OCI-LY7 (cell line): ENCODE measurements at regions of chr5 and their contacts with region 1.

Region 1: GRCh38 chr5:148730943-148731861 is 76.9 kb upstream of the HTR4 start:
- DNase-seq: peak; percentile 88
- H3K4me3 ChIP-seq: peak overlapping the region; percentile 28
- H3K27ac ChIP-seq: no peak overlapping the region
- H3K4me1 ChIP-seq: no peaks in the 10 kb centered on the region
- CTCF ChIP-seq: peak; percentile 100

Region 2: GRCh38 chr5:148179234-148179824 is 551.9 kb before region 1 on chr5:
- CTCF ChIA-PET with region 1: interaction called, 4 read pairs
- POLR2A ChIA-PET with region 1: no interaction called
- intact Hi-C with region 1: loop called (anchors 1 kb)
- DNase-seq: peak; percentile 61
- H3K4me3 ChIP-seq: no peak overlapping the region
- H3K27ac ChIP-seq: no peak overlapping the region
- H3K4me1 ChIP-seq: no peaks in the 10 kb centered on the region
- CTCF ChIP-seq: peak; percentile 87

Region 3: DNA sequence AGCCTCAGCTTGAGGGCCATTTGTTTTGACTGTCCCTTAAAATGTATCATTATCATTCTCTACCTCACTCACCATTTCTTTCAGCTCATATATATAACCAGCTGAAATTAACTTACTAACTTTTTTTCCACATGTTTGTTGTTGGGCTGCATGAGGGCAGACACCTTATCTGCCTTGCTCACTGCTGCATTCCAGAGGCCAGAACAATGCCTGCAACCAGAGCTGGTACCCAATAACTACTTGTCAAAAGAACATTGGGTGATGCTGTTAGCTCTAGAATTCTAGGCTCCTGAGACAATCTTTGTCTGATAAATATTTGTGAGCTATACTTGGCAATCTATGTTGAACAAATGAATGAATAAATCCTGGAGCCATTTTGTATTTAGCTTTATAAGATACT is 145.2 kb before region 1 on chr5:
- CTCF ChIA-PET with region 1: no interaction called
- POLR2A ChIA-PET with region 1: no interaction called
- intact Hi-C with region 1: no loop called
- DNase-seq: no peak
- H3K4me3 ChIP-seq: no peak overlapping the region
- H3K27ac ChIP-seq: no peak overlapping the region
- H3K4me1 ChIP-seq: no peaks in the 10 kb centered on the region
- CTCF ChIP-seq: 0 out of 2 replicates have a peak, but pooled peaks have one; percentile 17

Region 4: DNA sequence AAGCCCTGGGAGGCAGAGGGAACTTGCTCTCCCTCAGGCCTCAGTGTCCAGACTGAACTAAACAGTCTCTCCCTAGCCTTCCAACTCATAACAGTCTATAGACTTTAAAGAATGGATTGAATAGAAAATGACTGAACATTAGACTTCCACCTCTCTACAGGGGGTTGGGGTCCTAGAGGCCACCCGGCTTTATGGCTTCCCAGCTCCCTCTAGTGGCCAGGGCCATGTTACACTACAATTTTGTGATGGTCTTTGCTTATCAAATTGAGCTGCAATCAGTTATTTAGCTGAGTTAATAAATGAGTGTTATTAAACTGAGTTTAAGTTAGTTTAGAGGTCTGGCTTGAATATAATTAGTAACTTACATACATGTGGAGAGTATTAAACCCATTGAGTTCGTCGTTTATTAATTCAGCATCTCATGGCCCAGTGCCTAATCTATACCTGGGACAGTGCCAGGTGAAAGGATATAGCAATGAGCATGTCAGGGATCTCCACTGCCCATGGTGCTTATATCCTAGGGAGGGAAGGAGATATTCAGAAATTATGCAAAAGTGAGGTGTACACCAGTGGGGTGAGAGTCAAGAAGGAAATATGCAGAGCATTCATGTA is 226.5 kb after region 1 on chr5:
- CTCF ChIA-PET with region 1: interaction called, 24 read pairs
- POLR2A ChIA-PET with region 1: no interaction called
- intact Hi-C with region 1: loop called (anchors 1 kb)
- DNase-seq: peak; percentile 76
- H3K4me3 ChIP-seq: no peak overlapping the region
- H3K27ac ChIP-seq: no peak overlapping the region
- H3K4me1 ChIP-seq: no peaks in the 10 kb centered on the region
- CTCF ChIP-seq: peak; percentile 100

Region 5: GRCh38 chr5:149035372-149035790 is 304.2 kb after region 1 on chr5:
- CTCF ChIA-PET with region 1: interaction called, 6 read pairs
- POLR2A ChIA-PET with region 1: interaction called, 5 read pairs
- intact Hi-C with region 1: loop called (anchors 1 kb)
- DNase-seq: peak; percentile 54
- H3K4me3 ChIP-seq: no peak overlapping the region
- H3K27ac ChIP-seq: no peak overlapping the region
- H3K4me1 ChIP-seq: no peaks in the 10 kb centered on the region
- CTCF ChIP-seq: peak; percentile 89

Region 6: GRCh38 chr5:149268928-149269557 is 537.8 kb after region 1 on chr5:
- CTCF ChIA-PET with region 1: no interaction called
- POLR2A ChIA-PET with region 1: no interaction called
- intact Hi-C with region 1: loop called (anchors 5 kb)
- DNase-seq: peak; percentile 73
- H3K4me3 ChIP-seq: no peak overlapping the region
- H3K27ac ChIP-seq: no peak overlapping the region
- H3K4me1 ChIP-seq: no peaks in the 10 kb centered on the region
- CTCF ChIP-seq: peak; percentile 92